ENCODE measurements at regions of chr18 and their contacts with region 1.

Region 1: DNA sequence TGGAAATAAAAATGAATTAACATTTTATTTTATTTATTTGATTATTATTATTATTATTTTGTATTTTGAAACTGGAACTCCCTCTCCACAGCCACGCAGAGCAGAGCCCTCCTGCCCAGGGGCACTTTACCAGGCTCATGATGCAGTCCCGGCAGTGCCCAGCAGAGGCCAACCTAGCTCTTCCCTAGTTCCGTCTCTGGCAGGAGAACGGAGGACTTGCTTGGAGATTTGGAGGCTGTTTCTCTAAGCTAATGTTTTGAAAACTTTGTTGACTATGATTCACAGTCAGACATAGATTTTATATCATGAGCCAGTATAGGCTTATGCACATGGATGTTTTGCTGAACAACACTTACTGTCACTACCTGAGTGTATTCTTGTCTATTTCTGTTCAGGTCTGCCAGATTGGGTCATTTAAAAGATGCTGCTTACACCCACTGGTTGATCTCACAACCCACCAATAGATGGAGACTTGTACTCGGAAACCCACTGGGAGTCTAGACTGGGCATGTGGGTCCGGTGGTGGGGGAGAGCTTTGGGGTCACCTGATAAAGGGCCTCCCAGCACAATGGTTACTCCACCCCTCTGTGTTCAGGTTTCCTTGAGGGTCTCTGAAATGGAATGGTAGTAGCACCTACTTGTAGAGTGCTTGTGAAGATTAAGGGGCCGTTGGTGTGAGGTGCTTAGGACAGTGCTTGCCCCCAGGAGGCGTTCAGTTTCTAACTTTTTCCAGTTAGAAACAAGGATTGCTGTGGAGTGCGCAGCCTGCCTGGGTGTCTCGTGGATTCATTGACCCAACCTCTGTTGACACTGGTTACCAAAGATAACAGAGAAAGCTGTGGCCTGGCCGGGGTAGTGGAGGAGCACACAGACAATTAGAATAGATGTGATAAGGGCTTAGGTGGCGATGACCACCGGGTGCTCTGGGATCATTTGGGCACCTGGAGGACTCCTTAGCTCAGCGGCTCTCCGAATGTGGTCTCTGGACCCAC is 177.3 kb downstream of the HAUS1 start:
- H3K4me3 Mint-ChIP-seq: no peak overlapping the region
- H3K27ac Mint-ChIP-seq: no peak overlapping the region
- H3K4me1 Mint-ChIP-seq: peaks cover 11% of the 10 kb centered on the region
- H3K27me3 Mint-ChIP-seq: no peaks in the 10 kb centered on the region

Region 2: GRCh38 chr18:46481048-46481846 is 199.8 kb after region 1 on chr18:
- intact Hi-C with region 1: loop called (anchors 1 kb)
- H3K4me3 Mint-ChIP-seq: no peak overlapping the region
- H3K27ac Mint-ChIP-seq: no peak overlapping the region
- H3K4me1 Mint-ChIP-seq: no peaks in the 10 kb centered on the region
- H3K27me3 Mint-ChIP-seq: peaks cover 6% of the 10 kb centered on the region

Measured in dendritic cell treated with granulocyte-macrophage colony-stimulating factor and Interleukin-4, amounts not matched to agents 40 ng/mL and 50 ng/mL, for 4 days (primary cell).